ENCODE measurements at regions of chr4 and their contacts with region 1.

Region 1: GRCh38 chr4:67700738-67701516 is at the start of gene UBA6:
- DNase-seq: peak; percentile 98
- ATAC-seq: peak; percentile 98
- H3K4me3 Mint-ChIP-seq: peak within 1 kb of the TSS; percentile 87
- H3K27ac Mint-ChIP-seq: peak within 1 kb of the TSS; percentile 94
- H3K4me1 Mint-ChIP-seq: peaks cover 54% of the 10 kb centered on the region
- H3K27me3 Mint-ChIP-seq: no peaks in the 10 kb centered on the region
- total RNA-seq, gene UBA6: 88.3 to 97.3 TPM

Region 2: GRCh38 chr4:67581208-67581857 is 119.6 kb before region 1 on chr4:
- CTCF ChIA-PET with region 1: interaction called, 4 read pairs
- POLR2A ChIA-PET with region 1: no interaction called
- intact Hi-C with region 1: loop called in 1 of 2 experiments (anchors 1 kb)
- DNase-seq: no peak
- ATAC-seq: peak; percentile 81
- H3K4me3 Mint-ChIP-seq: peak overlapping the region; percentile 19
- H3K27ac Mint-ChIP-seq: peak overlapping the region; percentile 55
- H3K4me1 Mint-ChIP-seq: peaks cover 31% of the 10 kb centered on the region
- H3K27me3 Mint-ChIP-seq: no peaks in the 10 kb centered on the region

Region 3: DNA sequence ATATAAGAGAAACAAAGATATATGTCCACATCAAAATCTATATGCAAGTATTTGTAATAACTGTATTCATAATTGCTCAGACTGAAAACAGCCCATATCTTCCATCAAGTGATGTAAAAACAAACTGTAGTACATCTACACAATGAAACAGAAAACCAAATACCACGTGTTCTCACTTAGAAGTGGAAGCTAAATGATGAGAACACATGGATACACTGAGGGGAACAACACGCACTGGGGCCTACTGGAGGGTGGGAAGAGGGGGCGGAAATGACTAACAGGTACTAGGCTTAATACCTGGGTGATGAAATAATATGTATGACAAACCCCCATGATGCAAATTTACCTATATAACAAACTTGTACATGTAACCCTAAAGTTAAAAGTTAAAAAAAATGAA is 42.6 kb before region 1 on chr4:
- CTCF ChIA-PET with region 1: no interaction called
- POLR2A ChIA-PET with region 1: no interaction called
- intact Hi-C with region 1: loop called (anchors 1 to 2 kb)
- DNase-seq: peak; percentile 66
- ATAC-seq: peak; percentile 94
- H3K4me3 Mint-ChIP-seq: no peak overlapping the region
- H3K27ac Mint-ChIP-seq: peak overlapping the region; percentile 7
- H3K4me1 Mint-ChIP-seq: peaks cover 26% of the 10 kb centered on the region
- H3K27me3 Mint-ChIP-seq: no peaks in the 10 kb centered on the region

Region 4: DNA sequence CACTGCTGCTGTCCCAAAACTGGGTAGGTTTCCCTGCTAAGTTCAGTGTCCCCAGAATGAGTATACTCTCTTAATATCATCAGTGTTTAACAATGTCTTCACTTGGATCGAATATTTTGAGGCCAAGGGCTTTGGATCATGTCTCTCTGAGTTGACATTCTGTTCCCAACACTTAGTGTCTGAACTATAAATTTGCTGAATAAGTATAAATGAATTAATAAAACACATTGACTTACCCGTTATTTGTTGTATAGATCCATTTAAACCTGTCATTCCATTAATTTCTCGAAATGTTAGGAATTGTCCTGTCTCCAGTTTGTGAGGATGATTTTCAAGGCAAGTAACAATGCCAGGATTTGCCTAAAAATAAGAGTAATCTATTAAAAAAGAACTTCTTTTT is 32.6 kb before region 1 on chr4:
- CTCF ChIA-PET with region 1: no interaction called
- POLR2A ChIA-PET with region 1: no interaction called
- intact Hi-C with region 1: no loop called
- DNase-seq: no peak
- ATAC-seq: no peak
- H3K4me3 Mint-ChIP-seq: no peak overlapping the region
- H3K27ac Mint-ChIP-seq: no peak overlapping the region
- H3K4me1 Mint-ChIP-seq: peaks cover 6% of the 10 kb centered on the region
- H3K27me3 Mint-ChIP-seq: no peaks in the 10 kb centered on the region

Region 5: GRCh38 chr4:67714248-67714583 is 13.3 kb after region 1 on chr4:
- CTCF ChIA-PET with region 1: interaction called, 5 read pairs
- POLR2A ChIA-PET with region 1: interaction called, 4 read pairs
- intact Hi-C with region 1: loop called in 1 of 2 experiments (anchors 1 kb)
- DNase-seq: peak; percentile 69
- ATAC-seq: peak; percentile 98
- H3K4me3 Mint-ChIP-seq: peak overlapping the region; percentile 27
- H3K27ac Mint-ChIP-seq: peak overlapping the region; percentile 72
- H3K4me1 Mint-ChIP-seq: peaks cover 30% of the 10 kb centered on the region
- H3K27me3 Mint-ChIP-seq: no peaks in the 10 kb centered on the region

Region 6: DNA sequence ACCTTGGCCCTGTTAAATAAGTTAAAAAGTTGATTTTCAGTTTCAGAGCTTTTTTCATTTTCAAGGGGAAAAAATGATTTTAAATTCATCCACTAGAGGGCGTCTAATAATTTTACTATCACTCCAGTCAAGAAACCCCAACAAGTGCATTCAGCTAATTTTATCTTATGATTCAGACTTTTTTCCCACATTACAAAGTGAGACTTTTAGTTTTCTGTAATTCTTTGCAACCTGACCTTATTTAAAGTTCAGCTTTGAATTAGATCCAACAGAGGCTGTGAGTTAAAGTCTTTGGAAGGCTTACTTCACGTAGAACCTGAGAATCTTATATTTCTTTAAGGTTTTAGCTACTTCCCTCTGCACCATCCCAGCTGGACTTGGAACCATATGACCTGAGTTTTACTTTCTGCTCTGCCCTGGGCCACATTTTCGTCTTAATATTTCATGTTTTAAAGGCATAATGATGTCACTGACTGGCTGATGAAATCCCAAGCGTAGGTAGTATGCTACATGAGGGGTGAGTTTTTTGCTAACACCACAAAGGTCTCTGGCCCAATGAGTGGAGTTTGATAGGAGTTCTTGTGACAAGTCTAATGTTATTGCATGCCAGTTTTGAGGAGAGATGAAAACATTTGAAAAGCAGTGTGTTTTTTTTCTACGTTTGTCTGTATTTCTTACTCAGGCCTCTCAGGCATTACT is 46.0 kb after region 1 on chr4:
- CTCF ChIA-PET with region 1: interaction called, 7 read pairs
- POLR2A ChIA-PET with region 1: no interaction called
- intact Hi-C with region 1: loop called (anchors 2 to 5 kb)
- DNase-seq: no peak
- ATAC-seq: peak; percentile 78
- H3K4me3 Mint-ChIP-seq: peak overlapping the region; percentile 5
- H3K27ac Mint-ChIP-seq: peak overlapping the region; percentile 77
- H3K4me1 Mint-ChIP-seq: peaks cover 11% of the 10 kb centered on the region
- H3K27me3 Mint-ChIP-seq: no peaks in the 10 kb centered on the region

Region 7: DNA sequence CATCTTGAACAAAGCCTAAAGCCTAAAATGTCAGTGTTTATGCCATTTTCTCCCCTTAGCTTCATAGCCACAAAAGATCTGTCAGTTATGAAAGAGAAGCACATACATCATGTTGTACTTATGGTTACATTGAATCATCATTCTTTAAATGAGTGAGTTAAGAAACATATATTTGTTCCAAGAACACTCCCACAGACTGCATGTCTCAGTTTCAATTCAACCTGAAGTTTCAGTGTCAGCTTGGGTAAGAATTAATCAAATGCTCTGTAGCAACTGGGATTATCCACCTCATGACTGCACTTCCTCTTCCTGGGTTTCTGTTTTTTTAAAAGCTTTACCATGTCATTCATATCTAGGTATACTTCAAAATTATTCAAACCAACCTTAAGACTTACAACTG is 548.5 kb after region 1 on chr4:
- CTCF ChIA-PET with region 1: no interaction called
- POLR2A ChIA-PET with region 1: no interaction called
- intact Hi-C with region 1: loop called in 1 of 2 experiments (anchors 2 kb)
- DNase-seq: no peak
- ATAC-seq: peak; percentile 94
- H3K4me3 Mint-ChIP-seq: peak overlapping the region; percentile 5
- H3K27ac Mint-ChIP-seq: peak overlapping the region; percentile 96
- H3K4me1 Mint-ChIP-seq: peaks cover 15% of the 10 kb centered on the region
- H3K27me3 Mint-ChIP-seq: peaks cover 16% of the 10 kb centered on the region

Region 8: DNA sequence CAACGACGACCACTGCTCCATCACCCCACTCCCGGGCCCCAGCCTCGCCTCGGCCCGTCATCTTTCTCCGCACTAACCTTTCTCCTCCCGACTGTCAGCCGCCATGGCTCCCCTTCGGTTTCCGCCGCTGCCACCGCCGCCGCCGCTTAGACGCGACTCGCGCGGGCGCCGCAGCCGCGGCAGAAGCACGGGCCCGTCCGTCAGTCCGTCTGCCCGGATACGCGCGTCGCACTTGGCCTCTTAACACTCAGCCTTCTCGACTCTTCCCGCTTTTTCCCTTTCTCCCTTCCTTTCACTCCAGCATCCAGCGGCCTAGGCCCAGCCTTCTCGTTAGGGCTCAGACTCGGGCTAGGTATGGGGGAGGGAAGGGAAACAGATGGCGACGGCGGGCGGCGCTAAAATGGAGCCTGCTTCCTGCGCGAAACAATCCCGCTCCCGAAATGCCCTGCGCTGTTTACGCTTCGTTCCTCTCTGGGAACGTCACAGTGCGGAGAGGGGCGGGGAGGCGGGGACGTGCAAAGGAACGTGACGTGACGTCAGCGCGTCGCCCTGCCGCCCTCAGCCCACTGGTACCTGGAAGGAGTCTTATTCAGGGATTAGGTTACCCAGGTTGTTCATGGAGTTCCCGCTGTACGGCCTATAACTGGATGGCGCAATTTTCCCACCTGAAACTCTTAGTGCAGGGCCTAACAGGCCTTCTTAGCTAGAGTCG is 648.9 kb after region 1 on chr4 and contains the start of gene YTHDC1:
- CTCF ChIA-PET with region 1: no interaction called
- POLR2A ChIA-PET with region 1: no interaction called
- intact Hi-C with region 1: loop called in 1 of 2 experiments (anchors 1 kb)
- DNase-seq: peak; percentile 98
- ATAC-seq: peak; percentile 96
- H3K4me3 Mint-ChIP-seq: peak within 1 kb of the TSS; percentile 87
- H3K27ac Mint-ChIP-seq: peak within 1 kb of the TSS; percentile 98
- H3K4me1 Mint-ChIP-seq: peaks cover 26% of the 10 kb centered on the region
- H3K27me3 Mint-ChIP-seq: no peaks in the 10 kb centered on the region
- total RNA-seq, gene YTHDC1: 78.5 to 83.0 TPM

Measured in activated CD4-positive, alpha-beta T cell treated with anti-CD3 and anti-CD28 coated beads for 36 hours (primary cell).